ENCODE measurements at regions of chr3 and their contacts with region 1.

Region 1: DNA sequence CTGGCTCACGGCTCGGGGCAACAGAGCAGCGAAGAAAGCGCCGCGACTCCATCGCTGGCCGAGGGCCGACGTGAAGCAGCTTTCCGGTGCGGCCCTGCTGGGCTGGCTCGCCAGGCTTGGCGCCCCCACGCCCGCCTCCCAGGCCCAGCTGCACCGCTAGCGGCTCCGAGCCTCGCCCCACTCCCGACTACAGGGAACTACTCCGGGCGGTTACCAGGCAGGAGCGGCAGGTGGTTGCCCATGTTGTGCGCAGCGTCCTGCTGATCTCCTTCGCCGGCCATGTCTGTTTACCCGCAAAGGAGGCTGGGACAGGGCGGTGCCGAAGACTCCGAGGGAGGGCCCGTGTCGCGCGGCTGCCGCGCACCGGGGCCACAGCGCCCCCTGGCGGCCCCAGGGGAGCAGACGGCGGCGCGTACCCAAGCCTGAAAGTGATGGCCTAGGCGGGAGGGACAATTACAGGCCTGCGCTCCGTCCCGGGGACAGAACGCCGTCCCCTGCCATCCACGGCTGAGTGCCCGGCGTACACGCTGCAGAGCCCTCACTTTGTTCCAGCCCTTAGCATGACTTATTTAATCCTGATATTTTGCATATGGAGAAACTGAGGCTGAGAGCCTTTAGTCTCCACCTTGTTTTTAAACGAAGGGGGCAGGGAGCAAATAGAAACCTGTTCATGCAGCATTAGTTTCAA is at the start of gene CRBN:
- DNase-seq: peak; percentile 87 to 91 (median 89)
- H3K4me3 ChIP-seq: peak within 1 kb of the TSS; percentile 74 to 97
- H3K4me3 Mint-ChIP-seq: peak within 1 kb of the TSS; percentile 89 to 98 (median 93)
- H3K27ac ChIP-seq: peak within 1 kb of the TSS; percentile 93
- H3K27ac Mint-ChIP-seq: peak within 1 kb of the TSS; percentile 86 to 97 (median 95)
- H3K4me1 ChIP-seq: peaks cover 50% of the 10 kb centered on the region
- H3K4me1 Mint-ChIP-seq: peaks cover 35 to 45% (median 40%) of the 10 kb centered on the region in 4 donors
- H3K27me3 ChIP-seq: no peaks in the 10 kb centered on the region
- H3K27me3 Mint-ChIP-seq: no peaks in the 10 kb centered on the region
- total RNA-seq, gene CRBN: 150 to 162 TPM

Region 2: DNA sequence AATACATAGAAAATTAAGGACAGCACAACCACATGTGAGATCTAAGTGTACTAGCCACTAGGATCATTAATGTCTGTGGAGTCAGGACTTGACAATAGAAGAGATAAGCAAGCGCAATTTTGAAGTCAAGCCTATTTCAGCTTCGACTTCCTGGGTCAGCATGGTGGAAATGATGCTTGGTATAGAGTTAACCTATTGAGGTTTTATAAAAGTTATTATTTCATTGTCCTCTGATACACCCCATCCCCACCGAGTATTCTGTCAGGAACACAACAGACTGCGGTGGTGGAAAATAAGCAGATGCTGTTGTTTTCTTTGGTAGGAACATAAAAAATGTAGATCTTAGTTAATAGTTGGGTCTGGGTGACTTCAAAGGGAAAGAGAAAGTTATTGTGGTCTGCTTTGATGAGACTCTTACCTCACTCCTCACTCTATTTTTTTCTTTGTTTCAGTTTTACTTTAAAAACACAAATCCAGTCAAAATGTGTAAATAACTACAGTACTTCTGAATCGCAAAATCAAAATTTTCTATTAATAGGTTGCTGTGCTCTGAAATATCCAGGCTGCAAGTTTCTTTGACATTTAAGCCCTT is 151.5 kb before region 1 on chr3:
- CTCF ChIA-PET with region 1: no interaction called
- POLR2A ChIA-PET with region 1: no interaction called
- intact Hi-C with region 1: loop called (anchors 2 kb)
- DNase-seq: peak in 4 of 5 donors; percentile 48 to 60 (median 50)
- H3K4me3 ChIP-seq: no peak overlapping the region
- H3K4me3 Mint-ChIP-seq: peak overlapping the region; percentile 38 to 82 (median 64)
- H3K27ac ChIP-seq: no peak overlapping the region
- H3K27ac Mint-ChIP-seq: peak overlapping the region in 6 of 7 donors; percentile 10 to 62 (median 36)
- H3K4me1 ChIP-seq: peaks cover 14% of the 10 kb centered on the region
- H3K4me1 Mint-ChIP-seq: peaks cover 11 to 14% (median 13%) of the 10 kb centered on the region in 4 donors
- H3K27me3 ChIP-seq: no peaks in the 10 kb centered on the region
- H3K27me3 Mint-ChIP-seq: peaks cover 4 to 5% of the 10 kb centered on the region in 2 donors

Region 3: GRCh38 chr3:3126477-3127431 is 52.8 kb before region 1 on chr3 and contains the start of gene TRNT1:
- CTCF ChIA-PET with region 1: interaction called, 5 read pairs
- POLR2A ChIA-PET with region 1: interaction called, 6 read pairs
- intact Hi-C with region 1: loop called (anchors 1 kb)
- DNase-seq: peak; percentile 94 to 96 (median 95)
- H3K4me3 ChIP-seq: peak within 1 kb of the TSS; percentile 80 to 89
- H3K4me3 Mint-ChIP-seq: peak within 1 kb of the TSS; percentile 95 to 98 (median 96)
- H3K27ac ChIP-seq: peak within 1 kb of the TSS; percentile 93
- H3K27ac Mint-ChIP-seq: peak within 1 kb of the TSS; percentile 98 to 100 (median 99)
- H3K4me1 ChIP-seq: peaks cover 37% of the 10 kb centered on the region
- H3K4me1 Mint-ChIP-seq: peaks cover 21 to 50% (median 40%) of the 10 kb centered on the region in 4 donors
- H3K27me3 ChIP-seq: no peaks in the 10 kb centered on the region
- H3K27me3 Mint-ChIP-seq: no peaks in the 10 kb centered on the region
- total RNA-seq, gene TRNT1: 44.7 to 44.8 TPM

Region 4: GRCh38 chr3:3191675-3192285 is 12.2 kb after region 1 on chr3:
- CTCF ChIA-PET with region 1: interaction called, 61 read pairs
- POLR2A ChIA-PET with region 1: interaction called, 26 read pairs
- intact Hi-C with region 1: loop called (anchors 1 kb)
- DNase-seq: peak; percentile 36 to 54 (median 50)
- H3K4me3 ChIP-seq: peak overlapping the region; percentile 18 to 44
- H3K4me3 Mint-ChIP-seq: peak overlapping the region; percentile 36 to 86 (median 78)
- H3K27ac ChIP-seq: peak overlapping the region; percentile 49
- H3K27ac Mint-ChIP-seq: peak overlapping the region; percentile 83 to 93 (median 89)
- H3K4me1 ChIP-seq: peaks cover 47% of the 10 kb centered on the region
- H3K4me1 Mint-ChIP-seq: peaks cover 43 to 75% (median 59%) of the 10 kb centered on the region in 4 donors
- H3K27me3 ChIP-seq: no peaks in the 10 kb centered on the region
- H3K27me3 Mint-ChIP-seq: no peaks in the 10 kb centered on the region

Region 5: GRCh38 chr3:3281024-3281423 is 101.5 kb after region 1 on chr3:
- CTCF ChIA-PET with region 1: no interaction called
- POLR2A ChIA-PET with region 1: no interaction called
- intact Hi-C with region 1: no loop called
- DNase-seq: no peak
- H3K4me3 ChIP-seq: no peak overlapping the region
- H3K4me3 Mint-ChIP-seq: no peak overlapping the region
- H3K27ac ChIP-seq: no peak overlapping the region
- H3K27ac Mint-ChIP-seq: no peak overlapping the region
- H3K4me1 ChIP-seq: no peaks in the 10 kb centered on the region
- H3K4me1 Mint-ChIP-seq: no peaks in the 10 kb centered on the region
- H3K27me3 ChIP-seq: no peaks in the 10 kb centered on the region
- H3K27me3 Mint-ChIP-seq: peaks cover 3 to 5% of the 10 kb centered on the region in 2 donors

Measured in CD4-positive, alpha-beta memory T cell (primary cell).